Activated CD4-positive, alpha-beta memory T cell treated with anti-CD3 and anti-CD28 coated beads, Interleukin-2, amount 10 ng/mL, durations not matched to agents 7 days and 5 days (primary cell): ENCODE measurements at regions of chr19 and their contacts with region 1.

Region 1: DNA sequence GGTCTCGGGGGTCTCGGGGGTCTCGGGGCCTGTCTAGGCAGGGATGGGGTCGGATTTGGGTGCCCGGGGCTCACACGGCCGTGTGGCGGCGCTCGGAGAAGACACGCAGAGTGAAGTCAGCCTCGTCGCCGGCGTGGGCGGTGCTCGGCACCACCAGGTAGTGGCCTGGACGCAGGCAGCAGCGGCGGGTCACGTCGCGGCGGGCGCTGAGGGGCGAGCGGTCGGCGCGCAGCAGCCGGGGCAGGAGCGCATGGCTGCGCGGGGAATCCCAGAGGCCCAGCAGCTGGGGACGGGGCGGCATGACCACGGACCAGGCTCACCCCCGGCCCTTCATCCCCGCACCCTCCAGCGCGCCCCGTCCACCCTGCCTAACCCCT is 8.2 kb downstream of the CAPN12 start:
- DNase-seq: peak; percentile 65
- H3K4me3 Mint-ChIP-seq: peak overlapping the region; percentile 63
- H3K27ac Mint-ChIP-seq: no peak overlapping the region
- H3K4me1 Mint-ChIP-seq: peaks cover 62% of the 10 kb centered on the region
- H3K27me3 Mint-ChIP-seq: peaks cover 4% of the 10 kb centered on the region

Region 2: DNA sequence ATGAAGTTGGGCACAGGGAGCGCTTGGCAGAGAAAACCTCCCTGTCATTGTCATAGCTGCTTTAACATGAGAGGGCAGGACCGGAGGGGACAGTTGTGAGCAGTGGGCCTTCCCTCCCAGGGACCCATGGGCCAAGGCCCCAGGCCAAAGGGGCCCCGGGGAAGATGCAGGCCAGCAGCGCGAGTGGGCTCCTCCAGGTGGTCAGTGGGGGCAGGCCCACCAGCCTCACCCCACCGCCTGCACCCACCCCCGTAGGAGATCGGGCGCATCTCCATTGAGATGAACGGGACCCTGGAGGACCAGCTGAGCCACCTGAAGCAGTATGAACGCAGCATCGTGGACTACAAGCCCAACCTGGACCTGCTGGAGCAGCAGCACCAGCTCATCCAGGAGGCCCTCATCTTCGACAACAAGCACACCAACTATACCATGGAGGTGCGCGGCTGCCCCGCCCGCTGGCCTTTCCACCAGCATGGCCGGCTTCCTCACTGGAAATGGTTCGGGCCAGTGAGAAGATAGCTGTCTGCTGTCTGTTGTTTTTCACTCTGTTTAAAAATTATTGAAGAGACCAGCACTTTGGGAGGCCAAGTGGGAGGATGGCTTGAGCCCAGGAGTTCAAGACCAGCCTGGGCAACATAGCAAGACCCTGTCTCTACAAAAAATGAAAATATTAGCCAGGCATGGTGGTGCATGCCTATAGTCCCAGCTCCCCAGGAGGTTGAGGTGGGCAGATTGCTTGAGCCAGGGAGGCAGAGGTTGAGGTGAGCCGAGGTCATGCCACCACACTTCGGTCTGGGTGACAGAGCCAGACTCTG is 10.3 kb before region 1 on chr19:
- CTCF ChIA-PET with region 1: no interaction called
- POLR2A ChIA-PET with region 1: interaction called, 10 read pairs
- DNase-seq: no peak
- H3K4me3 Mint-ChIP-seq: no peak overlapping the region
- H3K27ac Mint-ChIP-seq: no peak overlapping the region
- H3K4me1 Mint-ChIP-seq: peaks cover 16% of the 10 kb centered on the region
- H3K27me3 Mint-ChIP-seq: no peaks in the 10 kb centered on the region

Region 3: DNA sequence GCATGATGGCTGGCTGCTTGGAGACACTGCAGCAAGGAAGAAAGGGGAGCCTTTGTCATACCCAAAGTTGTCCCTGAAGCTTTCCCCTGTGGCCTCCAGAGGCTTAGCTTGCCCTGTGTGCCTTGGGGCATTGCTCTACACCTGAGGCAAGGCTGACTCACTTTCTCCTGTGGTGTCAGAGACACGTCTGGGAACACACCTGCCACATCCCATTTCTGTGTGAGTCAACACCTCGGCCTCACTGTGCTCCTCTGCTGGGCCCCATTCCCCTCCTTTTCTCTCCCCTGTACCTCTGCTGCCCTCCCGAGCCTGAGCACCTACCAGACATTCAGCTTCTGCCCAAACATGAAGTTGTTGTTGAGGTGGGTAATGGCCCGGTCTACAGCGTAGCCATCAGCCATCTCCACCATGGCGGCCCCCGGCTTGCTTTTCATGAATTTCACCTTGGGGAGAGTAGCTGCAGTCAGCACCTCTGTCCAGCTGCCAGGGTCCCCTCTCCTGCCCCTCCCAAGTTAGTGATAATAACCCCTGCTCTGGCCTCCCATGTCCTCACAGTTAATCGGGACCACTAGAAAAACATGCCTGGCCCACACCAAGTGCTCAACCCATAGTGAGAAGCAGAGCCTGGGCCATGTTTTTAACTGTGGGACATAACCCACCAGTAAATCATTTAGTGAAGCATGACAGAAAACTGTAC is 102.7 kb after region 1 on chr19:
- CTCF ChIA-PET with region 1: no interaction called
- POLR2A ChIA-PET with region 1: interaction called, 11 read pairs
- DNase-seq: peak; percentile 32
- H3K4me3 Mint-ChIP-seq: no peak overlapping the region
- H3K27ac Mint-ChIP-seq: peak overlapping the region; percentile 61
- H3K4me1 Mint-ChIP-seq: peaks cover 51% of the 10 kb centered on the region
- H3K27me3 Mint-ChIP-seq: no peaks in the 10 kb centered on the region